Activated naive CD4-positive, alpha-beta T cell treated with anti-CD3 and anti-CD28 coated beads for 36 hours (primary cell): ENCODE measurements at regions of chr11 and their contacts with region 1.

Region 1: GRCh38 chr11:103055221-103055890 is 36.6 kb downstream of the DCUN1D5 start:
- DNase-seq: no peak
- H3K4me3 Mint-ChIP-seq: no peak overlapping the region
- H3K27ac Mint-ChIP-seq: no peak overlapping the region
- H3K4me1 Mint-ChIP-seq: peaks cover 17% of the 10 kb centered on the region
- H3K27me3 Mint-ChIP-seq: no peaks in the 10 kb centered on the region

Region 2: DNA sequence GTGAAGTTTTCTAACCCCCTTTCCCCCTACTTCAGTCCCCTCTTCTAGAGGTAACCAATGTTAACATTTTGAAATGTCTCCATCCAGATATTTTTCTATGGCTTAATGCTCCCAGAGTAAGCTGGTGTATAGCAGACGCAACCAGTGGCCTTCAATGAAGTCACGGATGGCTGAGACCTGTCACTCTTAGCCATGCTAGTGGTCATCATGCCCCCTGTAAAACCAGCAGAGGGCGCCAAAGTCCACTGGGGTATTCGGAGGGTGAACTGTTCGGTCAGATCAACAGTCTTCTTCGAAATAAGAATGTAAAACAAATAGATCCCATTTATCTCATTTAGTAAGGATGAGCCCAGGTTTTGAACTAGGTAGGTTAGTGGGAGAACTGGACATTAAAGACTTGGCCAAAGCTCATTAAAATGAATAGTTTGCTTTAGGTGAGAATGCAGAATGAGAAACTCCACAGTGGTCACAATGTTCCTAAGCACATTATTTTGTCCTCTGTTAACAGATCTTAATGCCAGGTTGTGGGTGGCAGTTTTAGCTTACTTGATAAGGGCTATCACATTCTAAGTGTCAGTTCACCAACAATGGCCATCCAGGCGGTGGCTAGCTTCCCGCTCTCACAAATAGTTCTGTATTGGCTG is 322.0 kb before region 1 on chr11:
- CTCF ChIA-PET with region 1: no interaction called
- intact Hi-C with region 1: loop called (anchors 1 kb)
- DNase-seq: peak; percentile 77
- H3K4me3 Mint-ChIP-seq: no peak overlapping the region
- H3K27ac Mint-ChIP-seq: no peak overlapping the region
- H3K4me1 Mint-ChIP-seq: no peaks in the 10 kb centered on the region
- H3K27me3 Mint-ChIP-seq: peaks cover 4% of the 10 kb centered on the region

Region 3: GRCh38 chr11:102794447-102794781 is 260.9 kb before region 1 on chr11:
- CTCF ChIA-PET with region 1: no interaction called
- intact Hi-C with region 1: loop called (anchors 1 kb)
- DNase-seq: peak; percentile 54
- H3K4me3 Mint-ChIP-seq: no peak overlapping the region
- H3K27ac Mint-ChIP-seq: no peak overlapping the region
- H3K4me1 Mint-ChIP-seq: no peaks in the 10 kb centered on the region
- H3K27me3 Mint-ChIP-seq: no peaks in the 10 kb centered on the region

Region 4: GRCh38 chr11:102810945-102811660 is 244.3 kb before region 1 on chr11:
- CTCF ChIA-PET with region 1: no interaction called
- intact Hi-C with region 1: loop called (anchors 5 kb)
- DNase-seq: no peak
- H3K4me3 Mint-ChIP-seq: no peak overlapping the region
- H3K27ac Mint-ChIP-seq: no peak overlapping the region
- H3K4me1 Mint-ChIP-seq: no peaks in the 10 kb centered on the region
- H3K27me3 Mint-ChIP-seq: peaks cover 8% of the 10 kb centered on the region

Region 5: GRCh38 chr11:102831489-102832440 is 223.6 kb before region 1 on chr11:
- CTCF ChIA-PET with region 1: no interaction called
- intact Hi-C with region 1: loop called (anchors 1 kb)
- DNase-seq: peak; percentile 54
- H3K4me3 Mint-ChIP-seq: peak overlapping the region; percentile 19
- H3K27ac Mint-ChIP-seq: no peak overlapping the region
- H3K4me1 Mint-ChIP-seq: no peaks in the 10 kb centered on the region
- H3K27me3 Mint-ChIP-seq: peaks cover 26% of the 10 kb centered on the region

Region 6: GRCh38 chr11:102914238-102915043 is 140.9 kb before region 1 on chr11:
- CTCF ChIA-PET with region 1: interaction called, 3 read pairs
- intact Hi-C with region 1: loop called (anchors 1 kb)
- DNase-seq: peak; percentile 30
- H3K4me3 Mint-ChIP-seq: no peak overlapping the region
- H3K27ac Mint-ChIP-seq: no peak overlapping the region
- H3K4me1 Mint-ChIP-seq: no peaks in the 10 kb centered on the region
- H3K27me3 Mint-ChIP-seq: peaks cover 11% of the 10 kb centered on the region

Region 7: GRCh38 chr11:103070142-103070541 is 14.8 kb after region 1 on chr11:
- CTCF ChIA-PET with region 1: no interaction called
- intact Hi-C with region 1: no loop called
- DNase-seq: no peak
- H3K4me3 Mint-ChIP-seq: no peak overlapping the region
- H3K27ac Mint-ChIP-seq: peak overlapping the region; percentile 66
- H3K4me1 Mint-ChIP-seq: peaks cover 39% of the 10 kb centered on the region
- H3K27me3 Mint-ChIP-seq: no peaks in the 10 kb centered on the region

Region 8: DNA sequence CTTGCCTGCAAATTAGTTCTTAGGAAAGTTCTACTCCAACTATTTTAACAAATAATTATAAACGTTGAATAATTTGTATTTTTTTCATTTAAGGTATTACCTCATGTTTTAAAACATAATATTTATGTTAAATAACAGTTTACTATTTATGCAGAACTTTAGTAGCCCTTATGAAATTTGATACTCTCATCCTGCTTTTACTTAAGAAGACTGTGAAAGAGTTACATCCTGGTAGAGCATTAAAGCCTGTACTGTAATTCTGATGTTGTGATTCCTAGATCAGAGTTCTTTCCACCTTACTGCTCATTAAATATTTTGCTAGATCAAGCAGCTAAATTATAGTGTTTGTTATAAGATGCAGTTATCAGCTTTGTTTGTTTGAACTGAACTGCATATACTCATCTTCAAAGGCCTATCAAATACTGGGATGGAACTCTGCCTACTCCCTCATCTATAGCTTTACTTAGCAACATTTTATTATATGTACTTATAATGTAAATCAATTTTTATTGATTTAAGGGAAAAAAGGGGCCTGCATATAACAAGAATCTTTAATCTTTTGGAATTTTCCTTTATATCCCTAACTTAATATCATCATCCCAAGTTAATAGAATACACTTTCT is 358.0 kb after region 1 on chr11:
- CTCF ChIA-PET with region 1: no interaction called
- intact Hi-C with region 1: no loop called
- DNase-seq: no peak
- H3K4me3 Mint-ChIP-seq: no peak overlapping the region
- H3K27ac Mint-ChIP-seq: no peak overlapping the region
- H3K4me1 Mint-ChIP-seq: no peaks in the 10 kb centered on the region
- H3K27me3 Mint-ChIP-seq: peaks cover 3% of the 10 kb centered on the region